ENCODE measurements at regions of chr6 and their contacts with region 1.

Region 1: GRCh38 chr6:31271641-31272357 is at the start of gene HLA-C:
- DNase-seq: peak; percentile 94
- ATAC-seq: peak; percentile 86
- H3K4me3 Mint-ChIP-seq: peak within 1 kb of the TSS; percentile 96
- H3K27ac Mint-ChIP-seq: peak within 1 kb of the TSS; percentile 100
- H3K4me1 Mint-ChIP-seq: peaks cover 46% of the 10 kb centered on the region
- H3K27me3 Mint-ChIP-seq: peaks cover 11% of the 10 kb centered on the region
- total RNA-seq, gene HLA-C: 1,075 to 1,135 TPM

Region 2: GRCh38 chr6:31252625-31253024 is 19.2 kb before region 1 on chr6:
- CTCF ChIA-PET with region 1: no interaction called
- POLR2A ChIA-PET with region 1: no interaction called
- DNase-seq: no peak
- ATAC-seq: no peak
- H3K4me3 Mint-ChIP-seq: no peak overlapping the region
- H3K27ac Mint-ChIP-seq: no peak overlapping the region
- H3K4me1 Mint-ChIP-seq: no peaks in the 10 kb centered on the region
- H3K27me3 Mint-ChIP-seq: peaks cover 32% of the 10 kb centered on the region

Region 3: GRCh38 chr6:31351401-31352309 is 79.9 kb after region 1 on chr6:
- CTCF ChIA-PET with region 1: no interaction called
- POLR2A ChIA-PET with region 1: interaction called, 105 read pairs
- DNase-seq: no peak
- ATAC-seq: peak; percentile 25
- H3K4me3 Mint-ChIP-seq: no peak overlapping the region
- H3K27ac Mint-ChIP-seq: peak overlapping the region; percentile 73
- H3K4me1 Mint-ChIP-seq: peaks cover 43% of the 10 kb centered on the region
- H3K27me3 Mint-ChIP-seq: peaks cover 5% of the 10 kb centered on the region

Region 4: GRCh38 chr6:31356946-31357466 is 85.2 kb after region 1 on chr6 and contains the start of gene HLA-B:
- CTCF ChIA-PET with region 1: no interaction called
- POLR2A ChIA-PET with region 1: interaction called, 105 read pairs
- DNase-seq: peak; percentile 89
- ATAC-seq: peak; percentile 77
- H3K4me3 Mint-ChIP-seq: peak within 1 kb of the TSS; percentile 92
- H3K27ac Mint-ChIP-seq: peak within 1 kb of the TSS; percentile 99
- H3K4me1 Mint-ChIP-seq: peaks cover 57% of the 10 kb centered on the region
- H3K27me3 Mint-ChIP-seq: peaks cover 10% of the 10 kb centered on the region
- total RNA-seq, gene HLA-B: 3,406 to 3,473 TPM

Measured in activated CD8-positive, alpha-beta T cell treated with anti-CD3 and anti-CD28 coated beads, Interleukin-2, amount 10 ng/mL, durations not matched to agents 7 days and 5 days (primary cell).